ENCODE measurements at regions of chr12 and their contacts with region 1.

Region 1: GRCh38 chr12:65952737-65953209 is 128.5 kb downstream of the HMGA2 start:
- DNase-seq: no peak
- ATAC-seq: no peak
- H3K4me3 ChIP-seq: no peak overlapping the region
- H3K27ac ChIP-seq: no peak overlapping the region
- H3K4me1 ChIP-seq: peaks cover 0 to 18% (median 12%) of the 10 kb centered on the region in 9 donors
- H3K27me3 ChIP-seq: no peaks in the 10 kb centered on the region
- CTCF ChIP-seq: no peak

Region 2: DNA sequence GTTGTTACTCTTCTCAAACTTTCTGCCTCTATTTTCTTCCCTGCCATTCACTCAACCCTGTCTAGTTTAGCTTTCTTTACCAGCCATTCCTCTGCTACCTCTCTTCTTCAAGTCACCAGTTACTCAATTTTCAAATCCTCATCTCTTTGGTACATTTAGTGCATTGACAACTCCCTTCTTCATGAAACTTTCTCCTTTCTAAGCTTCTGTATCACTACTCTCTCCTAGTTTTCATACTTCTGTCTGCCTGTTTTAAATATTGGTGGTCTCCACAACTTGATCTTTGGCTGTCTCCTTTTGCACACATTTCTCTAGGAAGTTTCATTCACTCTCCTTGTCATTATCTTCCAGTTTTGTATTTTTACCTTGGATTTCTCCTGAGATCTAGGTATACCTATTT is 777.4 kb before region 1 on chr12:
- intact Hi-C with region 1: loop called in 1 of 10 experiments (anchors 5 kb)
- DNase-seq: no peak
- ATAC-seq: no peak
- H3K4me3 ChIP-seq: no peak overlapping the region
- H3K27ac ChIP-seq: no peak overlapping the region
- H3K4me1 ChIP-seq: peaks cover 3 to 67% (median 49%) of the 10 kb centered on the region in 9 donors
- H3K27me3 ChIP-seq: no peaks in the 10 kb centered on the region
- CTCF ChIP-seq: no peak